CD8-positive, alpha-beta T cell (primary cell): ENCODE measurements at regions of chr11 and their contacts with region 1.

Region 1: DNA sequence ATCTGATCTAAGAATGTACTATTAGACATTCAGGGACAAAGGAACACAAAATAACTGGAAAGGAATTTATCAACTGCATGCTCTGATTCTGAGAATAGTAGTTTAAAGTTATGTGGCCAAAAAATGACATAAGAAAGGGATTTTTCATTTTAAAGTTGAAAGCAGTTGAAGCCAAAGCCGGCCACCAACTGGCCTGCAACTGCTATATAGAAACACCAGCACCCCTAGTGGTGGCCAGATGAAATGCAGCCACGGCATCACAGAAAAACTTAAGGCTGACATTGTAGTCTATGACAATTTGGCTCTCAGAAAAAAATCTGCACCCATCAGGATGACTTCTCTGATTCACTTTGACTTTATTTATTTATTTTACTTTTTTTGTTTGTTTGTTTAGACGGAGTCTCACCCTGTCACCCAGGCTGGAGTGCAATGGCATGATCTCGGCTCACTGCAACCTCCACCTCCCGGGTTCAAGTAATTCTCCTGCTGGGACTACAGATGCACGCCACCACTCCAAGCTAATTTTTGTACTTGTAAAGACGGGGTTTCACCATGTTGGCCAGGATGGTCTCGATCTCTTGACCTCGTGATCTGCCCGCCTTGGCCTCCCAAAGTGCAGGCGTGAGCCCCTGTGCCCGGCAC is 59.2 kb downstream of the SLC35F2 start:
- DNase-seq: peak; percentile 24 to 69 (median 55)
- ATAC-seq: peak; percentile 79
- H3K4me3 ChIP-seq: no peak overlapping the region
- H3K4me3 Mint-ChIP-seq: no peak overlapping the region
- H3K27ac ChIP-seq: no peak overlapping the region
- H3K27ac Mint-ChIP-seq: no peak overlapping the region
- H3K4me1 ChIP-seq: no peaks in the 10 kb centered on the region
- H3K4me1 Mint-ChIP-seq: no peaks in the 10 kb centered on the region
- H3K27me3 ChIP-seq: no peaks in the 10 kb centered on the region
- H3K27me3 Mint-ChIP-seq: no peaks in the 10 kb centered on the region
- CTCF ChIP-seq: peak; percentile 100

Region 2: GRCh38 chr11:107785401-107785800 is 13.9 kb before region 1 on chr11:
- CTCF ChIA-PET with region 1: interaction called, 7 read pairs
- POLR2A ChIA-PET with region 1: no interaction called
- intact Hi-C with region 1: loop called (anchors 1 kb)
- DNase-seq: no peak
- ATAC-seq: no peak
- H3K4me3 ChIP-seq: no peak overlapping the region
- H3K4me3 Mint-ChIP-seq: no peak overlapping the region
- H3K27ac ChIP-seq: no peak overlapping the region
- H3K27ac Mint-ChIP-seq: no peak overlapping the region
- H3K4me1 ChIP-seq: no peaks in the 10 kb centered on the region
- H3K4me1 Mint-ChIP-seq: no peaks in the 10 kb centered on the region
- H3K27me3 ChIP-seq: no peaks in the 10 kb centered on the region
- H3K27me3 Mint-ChIP-seq: peaks cover 16% of the 10 kb centered on the region
- CTCF ChIP-seq: no peak

Region 3: GRCh38 chr11:107973641-107974040 is 174.3 kb after region 1 on chr11:
- CTCF ChIA-PET with region 1: no interaction called
- POLR2A ChIA-PET with region 1: no interaction called
- intact Hi-C with region 1: no loop called
- DNase-seq: no peak
- ATAC-seq: no peak
- H3K4me3 ChIP-seq: no peak overlapping the region
- H3K4me3 Mint-ChIP-seq: no peak overlapping the region
- H3K27ac ChIP-seq: no peak overlapping the region
- H3K27ac Mint-ChIP-seq: no peak overlapping the region
- H3K4me1 ChIP-seq: no peaks in the 10 kb centered on the region
- H3K4me1 Mint-ChIP-seq: no peaks in the 10 kb centered on the region
- H3K27me3 ChIP-seq: no peaks in the 10 kb centered on the region
- H3K27me3 Mint-ChIP-seq: peaks cover 2% of the 10 kb centered on the region
- CTCF ChIP-seq: no peak